Naive thymus-derived CD4-positive, alpha-beta T cell (primary cell): ENCODE measurements at regions of chr14 and their contacts with region 1.

Region 1: GRCh38 chr14:23095196-23096108 is at the start of gene C14orf119:
- DNase-seq: peak in 8 of 9 donors; percentile 88 to 100 (median 100)
- ATAC-seq: peak; percentile 93
- H3K4me3 ChIP-seq: peak within 1 kb of the TSS; percentile 88
- H3K4me3 Mint-ChIP-seq: no peak within 1 kb of the TSS
- H3K27ac ChIP-seq: peak within 1 kb of the TSS; percentile 97
- H3K27ac Mint-ChIP-seq: no peak within 1 kb of the TSS
- H3K4me1 ChIP-seq: peaks cover 26 to 32% of the 10 kb centered on the region in 2 donors
- H3K4me1 Mint-ChIP-seq: peaks cover 3 to 63% (median 33%) of the 10 kb centered on the region in 7 donors
- H3K27me3 ChIP-seq: no peaks in the 10 kb centered on the region
- H3K27me3 Mint-ChIP-seq: no peaks in the 10 kb centered on the region
- total RNA-seq, gene C14orf119: 6.0 to 49.9 (median 43.4) TPM

Region 2: GRCh38 chr14:22918804-22919600 is 176.4 kb before region 1 on chr14 and contains the start of gene RBM23:
- CTCF ChIA-PET with region 1: no interaction called
- POLR2A ChIA-PET with region 1: interaction called, 8 read pairs
- intact Hi-C with region 1: loop called (anchors 1 kb)
- DNase-seq: peak; percentile 98 to 100 (median 100)
- ATAC-seq: peak; percentile 92
- H3K4me3 ChIP-seq: peak within 1 kb of the TSS; percentile 96
- H3K4me3 Mint-ChIP-seq: peak within 1 kb of the TSS; percentile 93 to 100 (median 97)
- H3K27ac ChIP-seq: peak within 1 kb of the TSS; percentile 98
- H3K27ac Mint-ChIP-seq: peak within 1 kb of the TSS; percentile 100
- H3K4me1 ChIP-seq: peaks cover 0 to 19% of the 10 kb centered on the region in 2 donors
- H3K4me1 Mint-ChIP-seq: peaks cover 18 to 56% (median 49%) of the 10 kb centered on the region in 7 donors
- H3K27me3 ChIP-seq: no peaks in the 10 kb centered on the region
- H3K27me3 Mint-ChIP-seq: peaks cover 0 to 4% (median 0%) of the 10 kb centered on the region in 5 donors
- total RNA-seq, gene RBM23: 91.9 to 140 (median 99.1) TPM

Region 3: DNA sequence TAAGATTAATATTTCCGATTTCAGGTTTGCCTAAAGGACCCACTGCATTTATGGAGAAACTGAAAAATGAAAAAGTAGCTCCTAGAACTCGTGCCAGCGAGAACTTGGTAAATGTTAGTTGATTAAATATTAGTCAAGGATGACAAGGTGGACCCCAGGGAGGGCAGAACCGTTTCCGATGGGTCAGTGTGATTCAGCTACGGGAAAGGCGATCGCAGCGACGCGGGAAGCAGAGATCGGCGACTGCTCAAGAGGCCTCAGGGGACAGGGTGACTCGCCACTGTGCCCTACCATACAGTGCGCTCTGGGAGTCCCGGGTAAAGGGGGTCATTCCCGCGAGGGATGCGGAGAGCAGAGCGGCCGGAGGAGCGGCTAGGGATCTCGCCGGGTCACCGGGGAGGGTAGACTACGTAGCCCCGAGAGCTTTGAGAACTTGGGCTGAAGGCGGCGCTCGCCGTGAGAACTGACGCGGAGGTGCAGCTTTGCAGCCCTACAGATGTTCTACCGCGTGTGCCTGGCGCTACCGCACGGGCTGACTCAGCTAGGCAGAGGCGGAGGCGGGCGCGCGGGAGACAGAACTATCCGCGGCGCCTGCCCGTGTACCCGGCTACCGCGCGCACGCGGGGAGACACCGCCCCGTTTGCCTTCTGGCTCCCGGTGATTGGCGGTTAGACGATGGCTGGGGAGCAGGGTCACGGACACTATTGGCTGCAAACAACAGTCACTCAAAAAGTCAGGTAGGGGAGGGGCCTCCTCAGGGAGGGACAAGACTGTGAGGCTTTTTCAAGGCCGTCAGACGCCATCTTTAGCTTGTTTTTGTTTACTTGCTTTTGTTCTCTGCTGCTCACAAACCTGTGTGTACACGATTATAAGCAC is 88.7 kb before region 1 on chr14:
- CTCF ChIA-PET with region 1: interaction called, 5 read pairs
- POLR2A ChIA-PET with region 1: interaction called, 25 read pairs
- intact Hi-C with region 1: loop called (anchors 1 kb)
- DNase-seq: peak; percentile 88 to 99 (median 98)
- ATAC-seq: peak; percentile 97
- H3K4me3 ChIP-seq: peak overlapping the region; percentile 94
- H3K4me3 Mint-ChIP-seq: peak overlapping the region; percentile 91 to 100 (median 96)
- H3K27ac ChIP-seq: peak overlapping the region; percentile 86
- H3K27ac Mint-ChIP-seq: peak overlapping the region; percentile 87 to 99 (median 98)
- H3K4me1 ChIP-seq: peaks cover 9 to 25% of the 10 kb centered on the region in 2 donors
- H3K4me1 Mint-ChIP-seq: peaks cover 12 to 60% (median 48%) of the 10 kb centered on the region in 7 donors
- H3K27me3 ChIP-seq: no peaks in the 10 kb centered on the region
- H3K27me3 Mint-ChIP-seq: no peaks in the 10 kb centered on the region

Region 4: GRCh38 chr14:23076785-23077408 is 18.6 kb before region 1 on chr14:
- CTCF ChIA-PET with region 1: interaction called, 25 read pairs
- POLR2A ChIA-PET with region 1: interaction called, 25 read pairs
- intact Hi-C with region 1: no loop called
- DNase-seq: peak in 5 of 9 donors; percentile 33 to 55 (median 49)
- ATAC-seq: peak; percentile 63
- H3K4me3 ChIP-seq: no peak overlapping the region
- H3K4me3 Mint-ChIP-seq: no peak overlapping the region
- H3K27ac ChIP-seq: peak overlapping the region; percentile 3
- H3K27ac Mint-ChIP-seq: peak overlapping the region in 2 of 9 donors; percentile 47 to 57
- H3K4me1 ChIP-seq: peaks cover 1 to 2% of the 10 kb centered on the region in 2 donors
- H3K4me1 Mint-ChIP-seq: peaks cover 8 to 28% (median 17%) of the 10 kb centered on the region in 7 donors
- H3K27me3 ChIP-seq: no peaks in the 10 kb centered on the region
- H3K27me3 Mint-ChIP-seq: no peaks in the 10 kb centered on the region

Region 5: DNA sequence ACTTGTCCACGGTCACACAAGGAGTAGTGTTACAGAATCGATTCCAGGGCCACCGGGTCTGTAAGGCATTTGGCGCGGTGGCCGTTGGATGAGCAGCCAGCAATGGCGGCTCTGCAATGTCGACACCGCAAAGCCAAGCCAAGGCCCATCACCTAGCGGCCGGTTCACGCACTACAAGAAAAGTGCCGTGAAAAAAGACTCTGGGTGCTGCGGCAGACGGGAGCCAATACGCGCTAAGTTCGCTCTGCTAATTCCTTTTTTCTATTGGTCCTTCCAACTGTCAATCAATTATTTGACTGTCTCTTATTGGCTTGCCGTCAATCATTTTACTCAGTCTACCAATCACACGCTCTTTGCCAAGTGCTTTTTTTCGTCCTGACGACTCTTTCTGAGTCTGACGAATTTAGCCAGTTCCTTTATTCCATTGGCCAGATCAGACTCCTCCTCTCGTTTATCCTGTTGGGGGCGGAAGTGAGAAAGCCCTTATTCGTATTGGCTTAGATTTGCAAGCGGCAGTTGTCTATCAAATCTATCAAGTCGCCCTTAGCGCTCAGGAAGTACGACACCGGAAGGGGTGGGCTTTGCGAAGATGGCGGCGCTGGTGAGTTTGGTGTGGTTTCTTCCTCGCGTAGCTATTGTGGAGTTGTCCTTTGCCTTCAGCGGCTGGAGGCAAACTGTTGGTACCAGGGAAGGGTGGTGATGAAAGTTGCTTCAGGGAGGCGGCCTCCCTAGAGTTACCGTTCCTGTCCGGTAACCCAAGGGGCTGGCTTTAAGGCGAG is 373.9 kb after region 1 on chr14 and contains the start of gene NGDN:
- CTCF ChIA-PET with region 1: no interaction called
- POLR2A ChIA-PET with region 1: no interaction called
- intact Hi-C with region 1: loop called (anchors 1 to 2 kb)
- DNase-seq: peak; percentile 76 to 99 (median 96)
- ATAC-seq: peak; percentile 94
- H3K4me3 ChIP-seq: peak within 1 kb of the TSS; percentile 73
- H3K4me3 Mint-ChIP-seq: peak within 1 kb of the TSS in 1 of 10 donors; percentile 77
- H3K27ac ChIP-seq: peak within 1 kb of the TSS; percentile 94
- H3K27ac Mint-ChIP-seq: peak within 1 kb of the TSS in 2 of 9 donors; percentile 26 to 68
- H3K4me1 ChIP-seq: peaks cover 6 to 11% of the 10 kb centered on the region in 2 donors
- H3K4me1 Mint-ChIP-seq: peaks cover 7 to 10% (median 7%) of the 10 kb centered on the region in 7 donors
- H3K27me3 ChIP-seq: no peaks in the 10 kb centered on the region
- H3K27me3 Mint-ChIP-seq: no peaks in the 10 kb centered on the region
- total RNA-seq, gene NGDN: 52.9 to 152 (median 74.0) TPM

Region 6: GRCh38 chr14:23953464-23954278 is 858.2 kb after region 1 on chr14 and contains the start of gene DHRS4:
- CTCF ChIA-PET with region 1: no interaction called
- POLR2A ChIA-PET with region 1: no interaction called
- intact Hi-C with region 1: no loop called
- DNase-seq: peak; percentile 63 to 84 (median 80)
- ATAC-seq: peak; percentile 94
- H3K4me3 ChIP-seq: peak within 1 kb of the TSS; percentile 77
- H3K4me3 Mint-ChIP-seq: peak within 1 kb of the TSS; percentile 94 to 100 (median 98)
- H3K27ac ChIP-seq: peak within 1 kb of the TSS; percentile 80
- H3K27ac Mint-ChIP-seq: peak within 1 kb of the TSS; percentile 70 to 94 (median 89)
- H3K4me1 ChIP-seq: peaks cover 8 to 17% of the 10 kb centered on the region in 2 donors
- H3K4me1 Mint-ChIP-seq: peaks cover 18 to 35% (median 27%) of the 10 kb centered on the region in 7 donors
- H3K27me3 ChIP-seq: no peaks in the 10 kb centered on the region
- H3K27me3 Mint-ChIP-seq: peaks cover 0 to 1% (median 0%) of the 10 kb centered on the region in 5 donors
- total RNA-seq, gene DHRS4: 7.8 to 19.9 (median 17.5) TPM